T-cell (primary cell): ENCODE measurements at regions of chr2 and their contacts with region 1.

Region 1: GRCh38 chr2:203599509-203599908 is 64.4 kb upstream of the RAPH1 start:
- DNase-seq: no peak
- ATAC-seq: no peak
- H3K4me3 ChIP-seq: no peak overlapping the region
- H3K4me3 Mint-ChIP-seq: no peak overlapping the region
- H3K27ac ChIP-seq: no peak overlapping the region
- H3K27ac Mint-ChIP-seq: no peak overlapping the region
- H3K4me1 ChIP-seq: no peaks in the 10 kb centered on the region
- H3K4me1 Mint-ChIP-seq: peaks cover 10 to 15% (median 11%) of the 10 kb centered on the region in 3 donors
- H3K27me3 ChIP-seq: peaks cover 0 to 5% of the 10 kb centered on the region in 2 experiments
- H3K27me3 Mint-ChIP-seq: peaks cover 0 to 2% of the 10 kb centered on the region in 2 donors

Region 2: DNA sequence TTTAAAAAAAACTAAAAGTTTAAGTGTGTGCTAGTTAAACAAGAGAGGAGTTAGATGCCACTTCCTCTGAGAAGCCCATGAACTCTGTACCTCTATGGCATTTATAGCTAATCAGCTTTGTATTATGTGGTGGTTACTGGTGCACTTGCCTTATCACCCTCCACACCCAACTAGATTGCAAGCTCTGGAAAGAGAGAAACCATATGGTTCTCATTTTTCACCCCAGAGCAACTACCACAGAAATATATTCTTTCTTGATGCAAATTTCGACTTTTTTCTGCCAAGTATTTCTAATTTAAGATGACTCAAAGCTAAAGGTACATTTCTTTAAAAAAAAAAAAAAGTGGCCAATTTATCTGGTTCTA is 88.6 kb before region 1 on chr2:
- CTCF ChIA-PET with region 1: no interaction called
- POLR2A ChIA-PET with region 1: interaction called in 1 of 2 experiments, 10 read pairs
- DNase-seq: no peak
- ATAC-seq: no peak
- H3K4me3 ChIP-seq: no peak overlapping the region
- H3K4me3 Mint-ChIP-seq: no peak overlapping the region
- H3K27ac ChIP-seq: no peak overlapping the region
- H3K27ac Mint-ChIP-seq: no peak overlapping the region
- H3K4me1 ChIP-seq: no peaks in the 10 kb centered on the region
- H3K4me1 Mint-ChIP-seq: no peaks in the 10 kb centered on the region
- H3K27me3 ChIP-seq: no peaks in the 10 kb centered on the region
- H3K27me3 Mint-ChIP-seq: no peaks in the 10 kb centered on the region